ENCODE measurements at regions of chr1 and their contacts with region 1.

Region 1: DNA sequence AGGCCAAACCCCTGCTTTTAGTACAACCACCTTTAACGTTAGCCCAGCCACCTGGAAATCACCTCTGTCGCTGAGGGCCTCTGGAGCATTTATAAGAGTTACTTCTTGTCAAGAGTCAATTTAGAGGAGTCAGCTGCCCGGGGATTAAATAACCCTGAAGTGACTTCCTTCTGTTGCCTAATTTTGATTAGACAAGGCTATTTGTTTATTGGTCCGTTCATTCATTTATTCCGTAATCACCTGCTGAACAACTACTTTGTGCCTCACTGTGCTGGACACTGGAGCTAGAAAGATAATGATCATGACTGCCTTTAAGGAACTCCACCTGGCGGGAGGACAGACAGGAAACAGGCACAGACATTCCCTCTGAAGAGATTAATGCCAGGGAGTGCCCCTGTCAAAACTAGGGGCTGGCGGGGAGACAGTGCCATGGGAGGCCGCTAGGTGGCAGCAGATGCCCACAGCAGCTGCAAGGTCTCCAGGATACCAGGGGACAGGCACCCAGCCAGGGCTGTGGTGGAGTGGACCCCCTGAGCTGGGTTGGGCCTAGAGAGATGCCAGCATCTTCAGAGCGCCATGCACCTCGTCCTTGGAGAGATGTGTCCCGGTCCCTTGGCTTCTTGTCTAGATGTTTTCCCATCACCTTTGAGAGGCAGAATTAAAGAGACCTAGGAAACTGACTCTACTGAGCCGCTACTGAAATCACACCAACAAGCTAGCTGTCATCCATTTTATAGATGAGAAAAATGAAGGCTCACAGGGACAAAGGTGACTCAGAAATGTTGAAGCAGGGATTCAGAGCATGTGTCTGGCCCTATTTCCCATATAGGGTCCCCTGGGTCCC is 3.7 kb downstream of the REN start:
- DNase-seq: peak; percentile 79 to 89
- ATAC-seq: peak; percentile 89 to 98 (median 95)
- H3K4me3 ChIP-seq: no peak overlapping the region
- H3K27ac ChIP-seq: no peak overlapping the region
- H3K4me1 ChIP-seq: no peaks in the 10 kb centered on the region
- H3K27me3 ChIP-seq: peaks cover 0 to 2% (median 0%) of the 10 kb centered on the region in 3 donors
- CTCF ChIP-seq: peak; percentile 100

Region 2: DNA sequence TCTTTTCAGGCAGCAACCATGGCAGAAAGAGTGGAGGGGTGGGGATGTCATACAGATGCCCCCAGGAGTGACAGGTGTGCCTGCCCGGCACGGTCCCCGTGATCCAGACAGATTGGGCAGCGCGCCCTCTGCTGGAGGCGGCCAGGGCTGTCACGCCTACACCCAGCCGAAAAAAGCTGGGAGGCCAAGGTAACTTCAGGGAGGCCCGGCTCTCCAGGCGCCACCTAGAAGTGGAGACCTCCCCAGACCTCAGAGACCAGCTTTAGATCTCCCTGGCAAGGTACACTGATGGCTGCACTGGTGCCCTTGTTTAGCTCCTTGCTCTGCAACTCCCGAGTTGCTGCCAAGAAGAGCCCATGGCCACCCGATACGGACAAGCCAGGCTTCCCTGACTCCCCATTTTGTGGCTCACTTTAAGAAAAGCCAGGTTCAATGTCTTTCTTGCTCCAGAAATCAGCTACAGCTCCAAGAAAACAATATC is 44.7 kb after region 1 on chr1:
- intact Hi-C with region 1: loop called (anchors 1 to 2 kb)
- DNase-seq: peak; percentile 74 to 85
- ATAC-seq: peak; percentile 96 to 98 (median 96)
- H3K4me3 ChIP-seq: no peak overlapping the region
- H3K27ac ChIP-seq: no peak overlapping the region
- H3K4me1 ChIP-seq: no peaks in the 10 kb centered on the region
- H3K27me3 ChIP-seq: peaks cover 0 to 2% (median 0%) of the 10 kb centered on the region in 3 donors
- CTCF ChIP-seq: peak; percentile 85